CD4-positive, alpha-beta T cell (primary cell): ENCODE measurements at regions of chr19 and their contacts with region 1.

Region 1: GRCh38 chr19:8005534-8006256 is at the start of gene ELAVL1:
- DNase-seq: peak; percentile 72 to 96 (median 88)
- ATAC-seq: peak; percentile 94
- H3K4me3 ChIP-seq: peak within 1 kb of the TSS; percentile 84
- H3K4me3 Mint-ChIP-seq: peak within 1 kb of the TSS; percentile 95
- H3K27ac ChIP-seq: peak within 1 kb of the TSS; percentile 61 to 74
- H3K27ac Mint-ChIP-seq: peak within 1 kb of the TSS; percentile 84
- H3K4me1 ChIP-seq: peaks cover 45% of the 10 kb centered on the region
- H3K4me1 Mint-ChIP-seq: peaks cover 42% of the 10 kb centered on the region
- H3K27me3 ChIP-seq: no peaks in the 10 kb centered on the region
- H3K27me3 Mint-ChIP-seq: no peaks in the 10 kb centered on the region
- CTCF ChIP-seq: no peak
- total RNA-seq, gene ELAVL1: 17.1 to 20.8 TPM

Region 2: GRCh38 chr19:7852851-7853769 is 152.6 kb before region 1 on chr19:
- CTCF ChIA-PET with region 1: no interaction called
- POLR2A ChIA-PET with region 1: no interaction called
- intact Hi-C with region 1: loop called in 1 of 2 experiments (anchors 2 kb)
- DNase-seq: peak; percentile 45 to 81 (median 58)
- ATAC-seq: peak; percentile 72
- H3K4me3 ChIP-seq: no peak overlapping the region
- H3K4me3 Mint-ChIP-seq: no peak overlapping the region
- H3K27ac ChIP-seq: no peak overlapping the region
- H3K27ac Mint-ChIP-seq: no peak overlapping the region
- H3K4me1 ChIP-seq: peaks cover 9% of the 10 kb centered on the region
- H3K4me1 Mint-ChIP-seq: no peaks in the 10 kb centered on the region
- H3K27me3 ChIP-seq: peaks cover 0 to 8% of the 10 kb centered on the region in 2 experiments
- H3K27me3 Mint-ChIP-seq: peaks cover 3% of the 10 kb centered on the region
- CTCF ChIP-seq: peak; percentile 92

Region 3: GRCh38 chr19:8017808-8018207 is 12.1 kb after region 1 on chr19:
- CTCF ChIA-PET with region 1: interaction called, 12 read pairs
- POLR2A ChIA-PET with region 1: no interaction called
- intact Hi-C with region 1: no loop called
- DNase-seq: peak in 11 of 14 experiments; percentile 9 to 70 (median 39)
- ATAC-seq: peak; percentile 96
- H3K4me3 ChIP-seq: no peak overlapping the region
- H3K4me3 Mint-ChIP-seq: no peak overlapping the region
- H3K27ac ChIP-seq: no peak overlapping the region
- H3K27ac Mint-ChIP-seq: no peak overlapping the region
- H3K4me1 ChIP-seq: peaks cover 8% of the 10 kb centered on the region
- H3K4me1 Mint-ChIP-seq: peaks cover 6% of the 10 kb centered on the region
- H3K27me3 ChIP-seq: no peaks in the 10 kb centered on the region
- H3K27me3 Mint-ChIP-seq: no peaks in the 10 kb centered on the region
- CTCF ChIP-seq: no peak

Region 4: GRCh38 chr19:8321060-8321985 is 315.6 kb after region 1 on chr19 and contains the starts of genes NDUFA7 and RPS28:
- CTCF ChIA-PET with region 1: no interaction called
- POLR2A ChIA-PET with region 1: no interaction called
- intact Hi-C with region 1: loop called in 1 of 2 experiments (anchors 10 kb)
- DNase-seq: peak; percentile 95 to 99 (median 98)
- ATAC-seq: peak; percentile 94
- H3K4me3 ChIP-seq: peak within 1 kb of the TSS; percentile 100
- H3K4me3 Mint-ChIP-seq: peak within 1 kb of the TSS; percentile 96
- H3K27ac ChIP-seq: peak within 1 kb of the TSS; percentile 85 to 96
- H3K27ac Mint-ChIP-seq: peak within 1 kb of the TSS; percentile 97
- H3K4me1 ChIP-seq: peaks cover 33% of the 10 kb centered on the region
- H3K4me1 Mint-ChIP-seq: peaks cover 41% of the 10 kb centered on the region
- H3K27me3 ChIP-seq: no peaks in the 10 kb centered on the region
- H3K27me3 Mint-ChIP-seq: no peaks in the 10 kb centered on the region
- CTCF ChIP-seq: peak; percentile 16
- total RNA-seq, gene NDUFA7: 42.0 to 42.7 TPM
- total RNA-seq, gene RPS28: 3,333 to 3,342 TPM

Region 5: DNA sequence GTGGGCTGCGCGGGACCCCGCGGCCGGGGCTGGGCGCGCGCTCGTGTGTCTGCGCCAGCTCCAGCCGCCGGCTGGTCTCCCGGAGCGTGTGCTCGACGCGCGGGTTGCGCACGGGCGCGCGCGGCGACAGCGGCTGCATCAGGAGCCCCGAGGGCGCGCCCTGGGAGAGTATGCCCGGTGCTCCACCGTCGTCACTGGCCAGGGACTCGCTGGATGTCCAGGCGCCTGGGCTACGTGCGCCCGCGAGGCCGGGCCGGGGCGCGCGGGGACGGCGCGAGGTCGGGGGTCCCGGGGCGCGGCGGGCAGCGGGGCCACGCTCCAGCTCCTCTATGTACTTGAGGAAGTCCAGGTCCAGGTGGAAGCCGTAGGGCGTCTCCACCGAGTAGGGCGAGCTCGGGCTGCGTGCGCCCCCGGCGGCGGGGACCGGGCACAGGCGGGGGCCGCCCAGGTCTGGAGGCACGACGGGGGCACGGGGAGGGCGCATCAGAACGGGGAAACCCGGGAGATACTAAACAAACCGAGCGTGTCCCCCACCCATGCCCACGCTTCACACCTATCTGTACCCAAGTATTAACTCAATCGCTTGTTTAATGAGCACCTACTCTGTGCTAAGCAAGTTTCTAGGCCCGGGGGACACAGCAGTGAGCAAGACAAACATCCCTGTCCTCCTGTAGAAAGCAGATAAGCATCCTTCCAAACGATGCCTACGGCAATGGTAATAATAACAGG is 329.8 kb after region 1 on chr19:
- CTCF ChIA-PET with region 1: no interaction called
- POLR2A ChIA-PET with region 1: no interaction called
- intact Hi-C with region 1: no loop called
- DNase-seq: peak in 6 of 14 experiments; percentile 6 to 42 (median 28)
- ATAC-seq: peak; percentile 66
- H3K4me3 ChIP-seq: no peak overlapping the region
- H3K4me3 Mint-ChIP-seq: peak overlapping the region; percentile 60
- H3K27ac ChIP-seq: no peak overlapping the region
- H3K27ac Mint-ChIP-seq: no peak overlapping the region
- H3K4me1 ChIP-seq: peaks cover 20% of the 10 kb centered on the region
- H3K4me1 Mint-ChIP-seq: peaks cover 5% of the 10 kb centered on the region
- H3K27me3 ChIP-seq: peaks cover 19 to 26% of the 10 kb centered on the region in 2 experiments
- H3K27me3 Mint-ChIP-seq: peaks cover 34% of the 10 kb centered on the region
- CTCF ChIP-seq: no peak